Left colon (tissue), 2 donors: ENCODE measurements at regions of chr14 and their contacts with region 1.

Region 1: DNA sequence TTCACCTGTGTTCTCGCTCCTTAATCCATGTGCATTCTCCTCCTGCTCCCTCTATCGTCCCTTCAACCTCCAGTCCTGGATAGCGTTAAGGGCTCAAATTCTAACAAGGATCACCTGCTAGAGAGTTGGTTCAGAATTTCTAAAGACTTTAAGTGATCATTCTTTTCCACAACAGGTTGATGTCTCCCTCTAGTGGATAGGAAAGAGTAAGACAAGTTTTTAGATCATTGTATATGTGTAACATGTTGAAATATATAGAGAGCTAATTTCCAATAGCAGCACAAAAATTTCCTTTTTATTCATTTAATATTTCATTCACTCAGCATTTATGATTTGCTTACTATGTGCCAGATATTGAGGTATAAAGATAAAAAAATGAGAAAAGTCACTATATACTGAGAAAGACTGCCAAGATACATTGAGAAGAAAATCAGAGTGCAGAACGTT is 9.3 kb upstream of the ESR2 start:
- DNase-seq: no peak
- ATAC-seq: peak; percentile 83

Region 2: GRCh38 chr14:64012720-64013119 is 290.8 kb before region 1 on chr14:
- intact Hi-C with region 1: loop called in 1 of 2 experiments (anchors 10 kb)
- DNase-seq: no peak
- ATAC-seq: no peak

Region 3: DNA sequence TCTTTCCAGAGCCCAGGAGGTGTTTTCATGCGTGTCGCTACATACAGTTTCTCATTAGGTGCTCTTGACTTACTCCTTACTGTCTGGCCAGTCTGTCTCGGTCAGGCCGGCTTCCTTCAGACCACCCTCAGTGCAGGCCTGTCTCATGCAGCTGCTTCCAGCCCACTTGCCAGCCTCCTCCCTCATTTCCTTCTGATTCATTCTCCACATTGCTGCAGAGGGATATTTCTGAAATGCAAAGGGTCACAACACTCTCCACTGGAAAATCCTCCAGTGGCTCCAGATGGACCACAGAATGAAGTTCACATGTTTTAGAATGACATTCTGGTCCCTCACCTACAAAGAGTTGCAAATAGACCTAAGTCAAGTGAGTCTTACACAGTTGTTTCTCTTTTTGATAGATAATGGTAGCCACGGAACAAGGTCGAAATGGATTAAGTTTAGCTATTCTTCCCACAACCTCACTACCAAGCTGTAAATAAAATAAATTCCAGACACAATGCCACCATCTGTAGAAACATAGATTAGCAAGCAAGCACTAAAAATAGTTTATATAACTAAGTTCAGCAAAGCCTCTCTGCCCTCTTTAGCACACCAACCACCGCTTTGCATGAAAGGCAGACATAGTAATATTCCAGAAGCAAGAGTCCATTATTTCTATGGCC is 156.2 kb before region 1 on chr14:
- intact Hi-C with region 1: no loop called
- DNase-seq: no peak
- ATAC-seq: no peak

Region 4: GRCh38 chr14:64244279-64244678 is 59.2 kb before region 1 on chr14:
- intact Hi-C with region 1: no loop called
- DNase-seq: peak in 1 of 2 donors; percentile 39
- ATAC-seq: peak; percentile 44

Region 5: DNA sequence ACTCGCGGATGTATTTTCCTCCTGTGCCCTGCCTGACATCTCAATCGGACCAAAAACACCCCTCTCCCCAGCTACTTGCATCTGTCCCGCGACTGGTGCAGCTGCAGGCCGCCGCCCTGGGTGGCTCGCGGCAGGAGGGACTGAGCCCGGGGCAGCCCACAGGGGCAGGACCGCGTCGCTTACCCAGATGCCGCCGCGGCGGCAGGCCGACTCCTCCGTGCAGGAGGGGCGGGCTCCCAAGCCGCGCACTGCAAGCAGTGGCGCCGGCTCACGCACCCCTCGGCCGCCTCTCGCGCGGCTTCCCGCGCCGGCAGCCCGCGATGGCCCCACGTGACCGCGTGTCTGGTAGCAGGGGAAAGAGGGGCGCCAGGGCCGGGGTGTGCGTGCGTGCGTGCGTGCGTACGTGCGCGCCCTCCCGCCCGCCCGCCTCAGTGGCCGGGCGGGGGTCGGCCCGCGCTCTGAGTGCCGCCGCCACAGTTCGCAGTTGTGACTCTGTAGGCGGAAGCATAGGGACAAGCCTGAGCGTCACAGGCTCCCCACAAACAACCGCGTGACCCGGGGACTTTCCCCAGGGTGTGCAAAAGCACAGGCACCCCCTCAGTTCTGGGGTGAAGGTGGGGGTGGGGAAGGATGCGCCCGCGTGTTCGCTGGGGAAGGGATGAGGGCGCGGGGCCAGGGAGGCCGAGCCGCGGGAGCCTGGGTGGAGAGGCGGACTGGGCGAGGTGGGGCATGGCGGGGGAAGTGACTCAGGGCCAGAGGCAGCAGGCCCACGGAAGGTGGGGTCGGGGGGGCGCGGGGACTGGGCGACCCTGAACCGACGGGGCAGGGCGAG is 200.2 kb after region 1 on chr14 and contains the start of gene ZBTB25:
- intact Hi-C with region 1: no loop called
- DNase-seq: peak; percentile 89
- ATAC-seq: peak; percentile 74
- total RNA-seq, gene ZBTB25: 5.9 to 6.5 TPM